Activated naive CD4-positive, alpha-beta T cell treated with anti-CD3 and anti-CD28 coated beads for 36 hours (primary cell): ENCODE measurements at regions of chr6 and their contacts with region 1.

Region 1: DNA sequence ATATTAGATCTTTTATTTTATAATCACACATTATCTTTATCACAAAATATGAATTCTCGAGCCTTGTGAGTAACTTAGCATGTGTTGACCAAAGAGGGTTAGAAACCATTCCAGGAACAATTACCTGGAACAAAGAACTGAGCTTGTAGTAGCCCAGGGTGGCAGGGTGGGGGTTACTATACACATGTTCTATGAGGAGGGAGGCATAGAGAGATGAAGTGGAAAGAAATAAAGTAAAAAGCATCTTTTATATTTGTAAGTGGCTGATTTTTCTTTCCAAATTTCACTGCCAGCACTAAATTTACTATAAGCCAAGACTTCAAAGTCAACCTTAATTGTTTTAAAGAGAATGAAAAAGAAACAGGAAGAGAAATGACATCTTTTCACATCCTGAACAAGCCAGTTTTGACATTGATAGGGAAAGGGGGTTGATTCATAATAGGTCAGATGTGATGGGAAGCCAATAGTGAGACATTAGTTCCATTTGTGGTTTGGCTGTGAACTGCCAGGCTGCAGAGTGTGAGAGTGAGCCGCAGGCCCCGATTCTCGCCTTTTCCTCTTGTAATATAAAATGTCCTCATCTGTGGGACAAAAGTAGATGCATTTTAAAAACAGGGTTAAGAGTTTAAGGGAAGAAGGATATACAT is 52.7 kb upstream of the MYB start:
- DNase-seq: peak; percentile 83
- H3K4me3 Mint-ChIP-seq: peak overlapping the region; percentile 26
- H3K27ac Mint-ChIP-seq: peak overlapping the region; percentile 74
- H3K4me1 Mint-ChIP-seq: peaks cover 43% of the 10 kb centered on the region
- H3K27me3 Mint-ChIP-seq: no peaks in the 10 kb centered on the region

Region 2: GRCh38 chr6:135002229-135002844 is 126.1 kb before region 1 on chr6:
- CTCF ChIA-PET with region 1: no interaction called
- intact Hi-C with region 1: no loop called
- DNase-seq: no peak
- H3K4me3 Mint-ChIP-seq: no peak overlapping the region
- H3K27ac Mint-ChIP-seq: no peak overlapping the region
- H3K4me1 Mint-ChIP-seq: peaks cover 19% of the 10 kb centered on the region
- H3K27me3 Mint-ChIP-seq: no peaks in the 10 kb centered on the region

Region 3: DNA sequence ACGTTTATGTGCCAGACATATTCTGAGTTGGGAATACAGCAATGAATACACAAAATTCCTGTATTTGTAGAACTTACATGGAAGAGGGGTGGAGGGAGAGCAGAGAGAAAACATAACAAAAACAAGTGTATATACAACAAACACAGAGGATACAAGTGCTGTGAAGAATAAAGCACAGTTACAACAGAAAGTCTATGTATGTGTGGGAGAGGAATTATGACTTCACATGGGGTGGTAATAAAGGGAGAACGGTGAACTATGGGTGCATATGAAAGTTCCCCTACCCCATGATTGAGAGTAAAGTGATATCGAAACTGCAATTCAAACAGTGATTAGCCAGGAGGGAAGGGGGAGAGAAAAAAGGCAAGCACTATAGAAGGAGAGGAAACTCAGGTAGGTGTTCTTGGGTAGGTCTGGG is 98.3 kb before region 1 on chr6:
- CTCF ChIA-PET with region 1: no interaction called
- intact Hi-C with region 1: loop called (anchors 1 kb)
- DNase-seq: peak; percentile 18
- H3K4me3 Mint-ChIP-seq: peak overlapping the region; percentile 10
- H3K27ac Mint-ChIP-seq: peak overlapping the region; percentile 71
- H3K4me1 Mint-ChIP-seq: peaks cover 63% of the 10 kb centered on the region
- H3K27me3 Mint-ChIP-seq: no peaks in the 10 kb centered on the region

Region 4: DNA sequence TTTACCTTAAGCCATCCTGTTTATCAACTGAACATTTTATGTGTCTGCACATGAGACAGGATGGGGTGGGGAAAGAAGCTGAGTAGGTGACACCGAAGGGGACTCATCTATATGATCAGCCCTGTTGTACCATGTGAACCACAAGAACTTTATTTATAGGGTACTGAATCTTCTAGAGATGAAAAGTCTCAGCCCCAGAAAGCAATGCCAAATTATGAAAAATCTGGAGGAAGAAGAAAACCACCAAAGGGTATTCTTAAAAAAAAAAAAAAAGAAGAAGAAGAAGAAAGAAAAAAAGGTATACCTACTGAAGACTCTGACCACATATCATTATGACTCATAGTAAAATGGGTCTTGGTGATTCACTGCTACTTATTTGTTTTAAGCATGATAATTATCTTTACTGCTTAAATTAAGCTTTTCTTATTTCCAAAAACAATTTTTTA is 34.0 kb before region 1 on chr6:
- CTCF ChIA-PET with region 1: interaction called, 5 read pairs
- intact Hi-C with region 1: loop called (anchors 1 kb)
- DNase-seq: peak; percentile 59
- H3K4me3 Mint-ChIP-seq: no peak overlapping the region
- H3K27ac Mint-ChIP-seq: peak overlapping the region; percentile 71
- H3K4me1 Mint-ChIP-seq: peaks cover 56% of the 10 kb centered on the region
- H3K27me3 Mint-ChIP-seq: no peaks in the 10 kb centered on the region

Region 5: GRCh38 chr6:135145063-135145800 is 16.8 kb after region 1 on chr6:
- CTCF ChIA-PET with region 1: interaction called, 19 read pairs
- intact Hi-C with region 1: loop called (anchors 1 kb)
- DNase-seq: no peak
- H3K4me3 Mint-ChIP-seq: no peak overlapping the region
- H3K27ac Mint-ChIP-seq: peak overlapping the region; percentile 76
- H3K4me1 Mint-ChIP-seq: peaks cover 51% of the 10 kb centered on the region
- H3K27me3 Mint-ChIP-seq: no peaks in the 10 kb centered on the region